ENCODE measurements at regions of chr5 and their contacts with region 1.

Region 1: GRCh38 chr5:107372723-107373450 is 297.9 kb downstream of the EFNA5 start:
- DNase-seq: no peak
- ATAC-seq: no peak
- H3K4me3 ChIP-seq: no peak overlapping the region
- H3K27ac ChIP-seq: no peak overlapping the region
- H3K4me1 ChIP-seq: no peaks in the 10 kb centered on the region
- H3K27me3 ChIP-seq: no peaks in the 10 kb centered on the region
- CTCF ChIP-seq: no peak
- EP300 ChIP-seq: no peak
- POLR2A ChIP-seq: no peak
- RAD21 ChIP-seq: no peak

Region 2: GRCh38 chr5:107359033-107359915 is 13.6 kb before region 1 on chr5:
- CTCF ChIA-PET with region 1: interaction called, 3 read pairs
- POLR2A ChIA-PET with region 1: no interaction called
- RAD21 ChIA-PET with region 1: no interaction called
- SMC1A ChIA-PET with region 1: interaction called, 12 read pairs
- in situ Hi-C with region 1: no loop called
- intact Hi-C with region 1: no loop called
- DNase-seq: no peak
- ATAC-seq: no peak; the same call in 2 of the 3 replicates
- H3K4me3 ChIP-seq: no peak overlapping the region
- H3K27ac ChIP-seq: no peak overlapping the region
- H3K4me1 ChIP-seq: peaks cover 6% of the 10 kb centered on the region; the same call in 1 of the 2 replicates
- H3K27me3 ChIP-seq: no peaks in the 10 kb centered on the region; a peak in 1 of 4 replicates
- CTCF ChIP-seq: no peak
- EP300 ChIP-seq: no peak
- POLR2A ChIP-seq: no peak
- RAD21 ChIP-seq: no peak

Measured in GM12878 (cell line).